Posterior vena cava (tissue), 2 donors: ENCODE measurements at regions of chr11 and their contacts with region 1.

Region 1: DNA sequence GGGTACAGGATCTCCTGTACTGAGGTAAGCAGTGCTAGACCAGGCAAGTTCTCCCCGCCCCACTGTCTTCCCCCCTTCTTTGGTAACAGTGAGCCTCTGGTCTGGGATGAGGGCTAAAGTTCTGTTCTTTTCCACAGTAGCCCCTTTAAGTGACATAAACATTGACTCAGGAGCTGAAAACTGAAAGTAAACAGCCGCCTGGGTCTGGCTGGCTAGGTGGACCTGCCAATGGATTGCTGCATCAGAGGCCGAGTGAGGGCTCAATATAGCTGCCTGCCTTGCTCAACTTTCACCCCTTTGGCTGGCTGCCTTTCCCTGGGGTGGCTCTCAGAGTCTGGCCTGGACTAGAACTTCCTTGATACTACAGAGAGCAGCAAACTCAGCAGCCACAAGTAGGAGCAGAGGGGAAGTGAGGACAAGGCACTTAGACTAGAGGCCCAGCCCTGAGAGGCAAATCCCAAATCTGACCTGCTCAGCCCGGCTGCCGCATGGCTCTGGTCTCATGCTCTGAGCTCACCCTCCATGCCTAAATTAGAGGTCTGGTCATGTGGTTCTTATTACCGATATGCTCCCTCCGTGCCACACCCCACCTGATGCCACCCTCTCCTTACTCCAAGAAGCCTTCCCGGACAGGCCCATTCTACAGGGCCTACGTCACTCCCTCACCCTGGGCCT is 9.6 kb upstream of the UCP3 start:
- DNase-seq: peak; percentile 97

Region 2: DNA sequence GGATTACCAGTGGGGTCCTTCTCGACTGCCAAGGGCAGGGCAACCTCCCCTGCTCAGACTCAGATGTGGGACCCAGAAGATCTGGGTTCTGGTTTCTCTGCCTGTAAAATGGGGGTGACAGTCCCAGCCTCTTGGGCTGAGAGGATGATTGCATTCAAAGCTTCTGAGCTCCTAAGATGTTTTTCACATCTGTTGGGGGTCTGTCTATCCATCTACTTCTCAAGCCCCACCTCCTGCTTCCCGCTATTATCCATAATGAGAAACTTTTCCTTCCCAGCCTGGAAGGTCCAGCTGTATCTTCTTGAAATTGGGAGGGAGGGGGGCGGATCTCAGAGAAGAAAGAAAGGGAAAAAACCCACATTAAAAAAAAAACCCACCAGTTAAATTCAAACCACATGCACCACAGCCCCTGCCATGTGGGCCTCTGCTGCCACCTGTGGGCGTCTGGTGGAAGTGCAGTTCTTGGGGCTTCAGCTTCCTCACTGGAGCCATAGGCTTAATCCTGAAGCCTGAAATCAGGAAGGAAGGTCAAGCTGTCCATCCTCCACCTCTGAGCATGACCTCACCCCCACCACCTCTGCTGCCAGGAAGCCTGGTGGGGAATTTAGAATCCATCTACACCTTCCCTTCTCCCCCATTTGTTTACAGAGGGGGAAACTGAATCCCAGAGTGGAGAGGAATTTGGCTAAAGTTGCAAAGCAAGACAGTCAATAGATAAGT is 683.1 kb before region 1 on chr11:
- intact Hi-C with region 1: no loop called
- DNase-seq: peak; percentile 94

Region 3: GRCh38 chr11:73982969-73983740 is 35.3 kb before region 1 on chr11:
- intact Hi-C with region 1: loop called in 1 of 2 experiments (anchors 5 kb)
- DNase-seq: peak; percentile 98

Region 4: GRCh38 chr11:74085542-74085892 is 67.0 kb after region 1 on chr11:
- intact Hi-C with region 1: no loop called
- DNase-seq: no peak